Stomach (tissue), 19 donors: ENCODE measurements at regions of chr6 and their contacts with region 1.

Region 1: GRCh38 chr6:148166339-148166968 is 176.2 kb upstream of the SASH1 start:
- DNase-seq: peak in 1 of 2 donors; percentile 81
- H3K4me3 ChIP-seq: no peak overlapping the region
- H3K27ac ChIP-seq: no peak overlapping the region
- H3K4me1 ChIP-seq: no peaks in the 10 kb centered on the region
- H3K27me3 ChIP-seq: no peaks in the 10 kb centered on the region
- CTCF ChIP-seq: peak in 5 of 7 experiments; percentile 44 to 69 (median 55)
- EP300 ChIP-seq: no peak
- POLR2A ChIP-seq: no peak

Region 2: DNA sequence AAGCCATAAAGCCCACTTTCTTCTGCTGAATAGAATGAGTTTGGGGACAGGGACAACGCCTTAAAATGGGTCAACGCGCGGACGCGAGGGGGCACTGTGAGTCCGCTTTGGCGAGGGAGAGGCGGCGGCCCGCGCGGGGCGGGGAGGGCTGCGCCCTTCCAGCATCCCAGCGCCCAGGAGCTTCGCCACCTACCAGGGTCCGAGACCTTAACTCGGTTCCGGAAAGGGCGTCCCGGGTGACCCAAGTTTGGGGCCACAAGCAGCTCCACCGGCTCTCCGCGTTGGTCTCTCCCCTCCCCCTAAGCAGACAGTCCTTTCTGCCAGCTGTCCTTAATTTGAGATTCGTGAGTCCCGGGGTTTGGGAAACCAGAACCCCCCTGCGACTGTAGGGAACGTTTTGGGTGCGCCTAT is 659.7 kb before region 1 on chr6:
- intact Hi-C with region 1: loop called (anchors 5 kb)
- DNase-seq: peak; percentile 78 to 90
- H3K4me3 ChIP-seq: peak overlapping the region; percentile 61 to 84 (median 65)
- H3K27ac ChIP-seq: no peak overlapping the region
- H3K4me1 ChIP-seq: peaks cover 10 to 40% (median 33%) of the 10 kb centered on the region in 4 donors
- H3K27me3 ChIP-seq: peaks cover 0 to 75% (median 7%) of the 10 kb centered on the region in 3 donors
- CTCF ChIP-seq: peak in 5 of 7 experiments; percentile 62 to 81 (median 77)
- EP300 ChIP-seq: no peak
- POLR2A ChIP-seq: no peak

Region 3: DNA sequence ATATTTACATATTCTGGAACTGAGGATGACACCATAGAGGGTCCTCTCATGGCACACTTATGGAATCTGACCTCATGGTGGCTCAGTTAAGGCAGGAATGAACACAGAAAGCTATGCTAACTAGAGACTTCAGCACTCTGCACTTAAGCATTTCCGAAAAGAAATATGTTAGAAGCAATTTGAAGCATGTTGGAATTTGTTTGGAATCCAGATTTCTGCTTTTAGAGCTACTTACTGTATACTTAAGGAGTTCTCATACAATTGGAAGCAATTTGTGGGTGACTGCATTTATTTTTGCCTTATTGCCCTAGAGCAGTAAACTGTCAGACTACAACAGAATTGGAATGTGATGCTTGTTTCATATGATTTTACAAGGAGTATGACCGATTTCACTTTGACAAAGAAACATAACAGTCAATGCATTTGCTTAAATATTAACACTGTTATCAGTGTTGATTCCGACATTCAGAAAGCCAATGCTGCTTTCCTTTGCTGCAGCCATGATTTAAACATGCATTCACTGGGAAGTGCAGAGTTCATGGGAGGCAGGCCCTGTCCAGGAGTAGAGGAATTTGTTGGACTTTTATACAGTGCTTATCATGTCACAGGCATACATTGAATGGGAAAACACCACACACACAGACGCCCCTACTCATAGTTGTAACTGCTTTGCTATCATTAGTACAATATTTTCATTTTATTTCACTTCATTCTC is 413.6 kb before region 1 on chr6:
- intact Hi-C with region 1: no loop called
- DNase-seq: no peak
- H3K4me3 ChIP-seq: no peak overlapping the region
- H3K27ac ChIP-seq: no peak overlapping the region
- H3K4me1 ChIP-seq: peaks cover 0 to 7% (median 4%) of the 10 kb centered on the region in 4 donors
- H3K27me3 ChIP-seq: no peaks in the 10 kb centered on the region
- CTCF ChIP-seq: no peak
- EP300 ChIP-seq: no peak
- POLR2A ChIP-seq: no peak

Region 4: GRCh38 chr6:147909640-147910039 is 256.8 kb before region 1 on chr6:
- intact Hi-C with region 1: no loop called
- DNase-seq: no peak
- H3K4me3 ChIP-seq: no peak overlapping the region
- H3K27ac ChIP-seq: no peak overlapping the region
- H3K4me1 ChIP-seq: no peaks in the 10 kb centered on the region
- H3K27me3 ChIP-seq: no peaks in the 10 kb centered on the region
- CTCF ChIP-seq: no peak
- EP300 ChIP-seq: no peak
- POLR2A ChIP-seq: no peak

Region 5: DNA sequence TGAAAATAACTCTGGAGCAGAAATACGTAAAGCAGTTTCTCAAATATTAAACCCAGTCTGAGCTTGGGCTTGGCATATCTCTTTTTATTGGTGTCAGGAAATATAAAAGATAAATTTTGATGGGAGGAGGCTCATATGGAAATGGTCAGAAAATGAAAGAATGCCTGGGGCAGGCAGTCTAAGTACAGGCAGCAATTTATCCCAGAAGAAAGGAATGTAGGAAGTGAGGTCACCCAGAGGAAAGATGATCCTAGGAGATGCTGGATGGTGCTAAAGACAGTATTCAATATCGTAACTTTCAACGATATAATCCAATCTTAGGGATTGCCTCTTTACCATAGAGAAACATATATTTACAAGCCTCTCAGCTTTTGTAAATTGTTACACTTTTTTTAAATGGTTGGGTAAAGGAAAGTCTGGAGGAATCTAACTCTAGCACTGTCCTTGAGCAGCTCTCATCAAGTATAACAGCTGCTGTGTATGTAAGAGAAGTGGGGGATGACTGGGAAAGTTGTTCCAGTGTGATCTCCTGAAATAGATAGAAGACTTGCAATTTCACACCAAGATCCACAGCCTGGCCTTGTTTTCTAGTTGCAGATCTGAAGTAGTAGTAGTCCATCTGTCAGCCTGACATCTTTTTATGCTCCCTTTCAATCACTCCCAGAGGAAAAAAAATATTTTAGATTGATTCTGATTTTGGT is 80.7 kb before region 1 on chr6:
- intact Hi-C with region 1: no loop called
- DNase-seq: no peak
- H3K4me3 ChIP-seq: no peak overlapping the region
- H3K27ac ChIP-seq: no peak overlapping the region
- H3K4me1 ChIP-seq: no peaks in the 10 kb centered on the region
- H3K27me3 ChIP-seq: no peaks in the 10 kb centered on the region
- CTCF ChIP-seq: no peak
- EP300 ChIP-seq: no peak
- POLR2A ChIP-seq: no peak